Activated CD4-positive, alpha-beta T cell treated with anti-CD3 and anti-CD28 coated beads for 36 hours (primary cell): ENCODE measurements at regions of chr21 and their contacts with region 1.

Region 1: GRCh38 chr21:22154579-22155274 is 1156.5 kb downstream of the NCAM2 start:
- DNase-seq: no peak
- ATAC-seq: no peak
- H3K4me3 Mint-ChIP-seq: no peak overlapping the region
- H3K27ac Mint-ChIP-seq: no peak overlapping the region
- H3K4me1 Mint-ChIP-seq: no peaks in the 10 kb centered on the region
- H3K27me3 Mint-ChIP-seq: no peaks in the 10 kb centered on the region

Region 2: DNA sequence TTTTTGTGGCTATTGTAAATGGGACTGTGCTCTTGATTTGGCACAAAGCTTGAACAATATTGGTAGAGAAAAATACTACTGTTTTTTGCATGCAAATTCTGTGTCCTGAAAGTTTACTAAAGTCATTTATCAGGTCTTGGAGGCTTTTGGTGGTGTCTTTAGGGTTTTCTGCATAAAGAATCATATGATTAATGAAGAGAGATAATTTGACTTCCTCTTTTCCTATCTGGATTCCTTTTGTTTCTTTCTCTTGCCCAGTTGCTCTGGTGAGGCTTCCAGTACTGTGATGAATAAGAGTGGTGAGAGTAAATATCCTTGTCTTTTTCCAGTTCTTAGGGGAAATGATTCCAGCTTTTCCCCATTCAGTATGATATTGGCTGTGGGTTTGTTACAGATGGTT is 10.2 kb after region 1 on chr21:
- CTCF ChIA-PET with region 1: no interaction called
- POLR2A ChIA-PET with region 1: no interaction called
- intact Hi-C with region 1: no loop called
- DNase-seq: no peak
- ATAC-seq: no peak
- H3K4me3 Mint-ChIP-seq: no peak overlapping the region
- H3K27ac Mint-ChIP-seq: no peak overlapping the region
- H3K4me1 Mint-ChIP-seq: no peaks in the 10 kb centered on the region
- H3K27me3 Mint-ChIP-seq: no peaks in the 10 kb centered on the region

Region 3: DNA sequence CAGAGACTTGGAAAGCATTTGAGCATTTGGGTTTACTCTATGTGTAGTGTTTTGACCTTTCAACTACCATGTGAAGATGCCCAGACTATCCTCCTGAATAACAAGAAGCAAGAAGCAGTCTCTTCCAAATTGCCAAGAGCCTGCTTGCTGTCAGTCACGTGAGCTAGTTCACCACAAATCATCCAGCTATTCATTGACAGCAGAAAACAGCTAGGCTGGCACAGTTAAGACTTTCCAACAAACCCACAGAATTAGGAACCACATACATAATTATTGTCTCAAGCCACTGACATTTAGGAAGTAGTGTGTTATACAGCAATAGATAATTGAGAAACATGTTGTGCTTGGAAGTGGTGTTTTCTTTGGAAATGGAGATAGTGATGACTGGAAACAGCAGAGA is 495.5 kb after region 1 on chr21:
- CTCF ChIA-PET with region 1: no interaction called
- POLR2A ChIA-PET with region 1: interaction called, 10 read pairs
- intact Hi-C with region 1: no loop called
- DNase-seq: no peak
- ATAC-seq: no peak
- H3K4me3 Mint-ChIP-seq: no peak overlapping the region
- H3K27ac Mint-ChIP-seq: no peak overlapping the region
- H3K4me1 Mint-ChIP-seq: no peaks in the 10 kb centered on the region
- H3K27me3 Mint-ChIP-seq: no peaks in the 10 kb centered on the region